Common myeloid progenitor, CD34-positive (primary cell): ENCODE measurements at regions of chr5 and their contacts with region 1.

Region 1: DNA sequence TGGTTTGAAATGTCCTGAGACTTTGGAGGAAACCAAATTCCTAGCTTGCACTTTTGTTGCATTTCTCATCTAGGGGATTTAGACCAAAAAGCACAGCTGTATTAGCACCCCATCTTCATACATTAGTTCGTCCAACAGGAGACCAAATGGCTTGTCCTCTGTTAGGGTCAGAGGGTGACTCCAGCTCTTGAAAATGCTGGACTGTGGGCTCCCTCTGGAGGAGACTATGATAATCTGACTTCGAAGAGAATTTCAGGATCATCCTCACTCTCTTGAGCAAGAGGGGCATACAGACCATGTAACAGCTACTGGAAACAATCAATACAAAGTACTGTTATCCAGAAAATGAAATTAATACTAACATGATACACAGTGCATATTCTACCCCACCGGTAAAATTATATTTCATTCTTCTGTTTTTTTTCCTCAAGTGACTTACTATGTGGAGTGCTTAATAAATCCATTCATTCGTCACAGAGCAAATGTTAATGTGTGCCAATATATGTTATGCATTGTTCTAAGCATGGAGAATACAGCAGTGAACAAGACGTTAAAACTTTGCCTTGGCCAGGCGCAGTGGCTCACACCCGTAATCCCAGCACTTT is 63.7 kb upstream of the PPP2CA start:
- DNase-seq: peak; percentile 83 to 88 (median 86)
- H3K4me3 ChIP-seq: no peak overlapping the region
- H3K27ac ChIP-seq: no peak overlapping the region
- H3K4me1 ChIP-seq: no peaks in the 10 kb centered on the region
- H3K27me3 ChIP-seq: no peaks in the 10 kb centered on the region

Region 2: GRCh38 chr5:134184155-134185135 is 105.2 kb before region 1 on chr5:
- CTCF ChIA-PET with region 1: interaction called, 113 read pairs
- POLR2A ChIA-PET with region 1: interaction called, 4 read pairs
- DNase-seq: peak; percentile 63 to 81 (median 71)
- H3K4me3 ChIP-seq: no peak overlapping the region
- H3K27ac ChIP-seq: no peak overlapping the region
- H3K4me1 ChIP-seq: no peaks in the 10 kb centered on the region
- H3K27me3 ChIP-seq: no peaks in the 10 kb centered on the region

Region 3: DNA sequence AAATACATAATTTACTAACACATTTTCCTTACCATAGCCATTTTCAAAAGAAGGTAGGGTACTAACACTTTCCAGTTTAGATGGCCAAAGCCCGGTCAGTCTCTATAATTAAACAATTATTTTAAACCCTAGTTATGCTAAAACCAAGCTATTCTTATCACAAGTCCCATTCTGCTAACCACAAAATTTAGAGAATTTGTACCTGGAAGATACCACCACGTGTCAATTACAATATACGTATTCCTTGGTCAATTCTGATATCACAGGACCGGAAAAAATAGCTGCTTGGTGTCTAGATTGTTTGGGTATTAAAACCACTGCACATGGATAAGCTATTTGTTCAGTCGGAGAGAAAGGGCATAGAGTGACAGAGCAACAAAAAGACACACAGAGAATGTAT is 93.9 kb before region 1 on chr5:
- CTCF ChIA-PET with region 1: interaction called, 15 read pairs
- POLR2A ChIA-PET with region 1: no interaction called
- DNase-seq: no peak
- H3K4me3 ChIP-seq: no peak overlapping the region
- H3K27ac ChIP-seq: no peak overlapping the region
- H3K4me1 ChIP-seq: no peaks in the 10 kb centered on the region
- H3K27me3 ChIP-seq: no peaks in the 10 kb centered on the region

Region 4: DNA sequence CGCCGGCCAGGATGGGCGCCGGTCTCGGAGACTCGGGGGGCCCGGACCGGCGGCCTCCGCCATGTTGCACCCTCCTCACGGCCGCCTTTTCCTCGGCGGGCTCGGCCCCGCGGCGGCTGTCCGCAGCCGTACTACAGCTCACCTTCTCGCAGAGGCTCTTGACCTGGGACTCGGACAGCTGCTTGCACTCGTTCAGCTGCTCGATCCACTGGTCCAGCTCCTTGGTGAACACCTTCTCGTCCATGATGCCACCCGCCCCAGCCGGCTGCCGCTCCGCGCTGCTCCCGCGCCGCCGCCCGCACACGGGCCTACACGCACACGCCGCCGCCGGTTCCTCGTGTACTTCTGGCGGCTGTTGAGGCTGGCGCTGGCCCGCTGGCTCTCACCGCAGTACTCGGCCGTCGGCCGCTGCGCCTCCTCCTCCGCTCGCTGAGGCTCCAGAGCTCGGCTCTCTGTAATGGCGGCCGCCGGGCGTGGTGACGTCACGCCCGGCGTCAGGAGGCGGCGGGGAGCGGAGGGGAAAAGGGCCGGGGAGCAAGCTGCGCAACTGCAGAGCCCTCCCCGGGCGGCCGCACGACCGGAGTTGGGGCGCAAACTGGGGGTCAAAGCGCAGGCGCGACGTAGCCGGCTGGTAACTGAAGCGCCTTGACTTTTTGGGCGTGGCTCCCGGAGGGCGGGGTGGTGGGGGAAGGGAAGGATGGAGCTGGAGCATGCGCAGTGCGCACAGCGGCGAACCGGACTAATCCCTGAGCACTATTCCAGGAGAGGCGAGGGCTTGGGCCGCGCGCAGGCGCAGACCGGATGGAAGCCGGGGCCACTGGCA is 63.8 kb before region 1 on chr5 and contains the start of gene PPP2CA:
- CTCF ChIA-PET with region 1: interaction called, 19 read pairs
- POLR2A ChIA-PET with region 1: no interaction called
- DNase-seq: peak; percentile 98 to 99 (median 99)
- H3K4me3 ChIP-seq: peak within 1 kb of the TSS; percentile 95 to 100 (median 98)
- H3K27ac ChIP-seq: peak within 1 kb of the TSS; percentile 99 to 100
- H3K4me1 ChIP-seq: peaks cover 25 to 44% (median 33%) of the 10 kb centered on the region in 4 experiments
- H3K27me3 ChIP-seq: no peaks in the 10 kb centered on the region

Region 5: DNA sequence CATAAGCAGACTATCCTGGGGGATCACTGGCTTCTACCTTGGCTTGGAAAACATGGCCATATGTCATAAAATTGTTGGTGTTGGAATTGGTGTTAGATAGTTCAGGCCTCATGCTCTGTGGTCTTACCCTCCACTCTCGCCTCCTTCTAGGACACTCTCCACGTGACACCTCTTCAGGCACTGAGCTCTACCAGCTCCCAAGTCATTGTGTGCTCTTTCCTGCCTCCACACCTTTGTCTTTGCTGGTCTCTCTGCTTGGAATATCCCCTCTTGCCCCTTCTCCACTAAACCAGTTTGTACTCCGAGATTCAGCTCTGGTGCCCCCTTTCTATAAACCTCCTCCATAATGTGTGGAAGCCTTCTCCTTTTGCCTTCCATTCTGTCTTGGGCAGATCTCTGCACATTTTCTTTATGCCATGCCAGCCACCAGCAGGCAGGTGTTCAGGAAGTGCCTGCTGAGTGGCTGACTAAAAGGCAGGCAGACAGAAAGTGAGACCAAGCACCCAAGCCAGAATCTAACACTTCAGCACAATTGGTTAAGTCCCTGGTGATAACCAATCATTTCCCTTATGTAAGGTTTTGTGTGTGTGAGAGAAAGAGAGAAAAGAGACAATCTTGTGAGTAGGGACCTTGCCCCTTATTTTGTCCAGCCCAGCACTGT is 305.3 kb after region 1 on chr5:
- CTCF ChIA-PET with region 1: no interaction called
- POLR2A ChIA-PET with region 1: no interaction called
- DNase-seq: peak; percentile 15 to 80 (median 70)
- H3K4me3 ChIP-seq: peak overlapping the region in 2 of 7 experiments; percentile 1 to 12
- H3K27ac ChIP-seq: no peak overlapping the region
- H3K4me1 ChIP-seq: peaks cover 5 to 26% (median 24%) of the 10 kb centered on the region in 4 experiments
- H3K27me3 ChIP-seq: no peaks in the 10 kb centered on the region